ENCODE measurements at regions of chr14 and their contacts with region 1.

Region 1: DNA sequence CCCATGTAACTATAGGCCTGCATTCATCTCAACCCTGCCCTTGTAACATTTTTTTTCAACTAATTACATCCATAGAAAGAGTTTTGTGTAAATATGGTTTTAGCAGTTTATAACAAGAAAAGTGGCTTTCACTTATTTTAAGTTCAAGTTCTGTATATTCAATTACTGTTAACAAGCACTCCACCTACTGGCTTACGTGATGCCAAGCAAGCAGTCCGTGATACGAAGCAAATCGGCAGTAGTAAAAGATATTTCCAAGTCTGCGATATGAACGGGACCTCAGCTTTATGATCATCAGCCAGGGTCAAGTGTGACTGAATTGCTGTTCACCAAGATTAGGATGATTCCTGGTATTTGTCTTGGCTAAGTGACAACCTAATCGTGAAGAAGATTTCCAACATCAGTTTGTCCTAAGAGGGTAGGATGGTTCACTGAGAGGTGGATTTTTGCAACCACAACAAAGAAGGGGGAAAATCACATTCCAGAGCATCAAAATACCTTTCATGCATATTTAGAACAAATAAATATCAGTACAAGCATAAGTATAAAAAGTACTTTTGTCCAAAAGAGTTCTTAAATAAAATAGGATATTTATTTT is 456.2 kb downstream of the FOXG1 start:
- DNase-seq: no peak
- ATAC-seq: no peak
- H3K4me3 ChIP-seq: no peak overlapping the region
- H3K27ac ChIP-seq: no peak overlapping the region
- H3K4me1 ChIP-seq: no peaks in the 10 kb centered on the region
- H3K27me3 ChIP-seq: no peaks in the 10 kb centered on the region
- CTCF ChIP-seq: peak; percentile 31 to 42 (median 41); a peak in 5 of 6 replicates
- EP300 ChIP-seq: no peak
- POLR2A ChIP-seq: no peak
- RAD21 ChIP-seq: peak; percentile 48

Region 2: DNA sequence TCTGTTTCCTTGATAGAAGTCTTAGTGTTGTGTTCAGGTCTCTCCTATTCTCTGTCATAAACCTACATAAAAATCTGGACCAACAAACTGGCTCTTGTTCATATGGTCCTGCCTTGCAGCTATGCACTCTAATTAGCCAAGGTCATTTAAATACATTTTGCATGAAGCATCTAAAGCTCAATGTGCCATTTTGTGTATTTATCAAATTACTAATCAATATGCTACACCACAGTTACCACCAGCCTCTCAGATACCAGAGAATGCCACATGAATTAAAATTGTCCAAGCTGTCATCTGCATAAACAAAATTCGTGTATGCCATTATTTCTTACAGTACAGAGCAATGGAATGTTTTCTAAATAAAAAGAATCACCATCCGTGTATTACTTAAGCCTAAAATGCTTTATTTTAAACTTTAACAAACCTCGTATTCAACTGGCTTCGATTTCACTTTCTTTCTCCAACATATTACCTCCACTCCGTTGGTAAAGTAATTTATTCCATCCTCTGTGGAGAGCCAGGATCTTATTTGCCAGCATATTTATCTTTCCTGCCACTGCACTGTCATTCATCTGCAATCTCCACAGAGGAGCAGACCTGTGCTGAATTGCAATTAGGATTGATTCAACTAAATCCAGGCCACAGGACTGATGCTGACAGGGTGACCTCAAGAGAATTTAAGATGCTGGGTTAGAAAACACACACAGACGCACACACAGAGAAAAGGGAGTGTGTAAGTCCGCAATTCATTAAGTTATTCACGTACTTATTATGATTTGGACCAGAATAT is 740.3 kb before region 1 on chr14:
- CTCF ChIA-PET with region 1: no interaction called
- POLR2A ChIA-PET with region 1: no interaction called
- RAD21 ChIA-PET with region 1: no interaction called
- SMC1A ChIA-PET with region 1: no interaction called
- in situ Hi-C with region 1: no loop called
- intact Hi-C with region 1: no loop called
- DNase-seq: no peak
- ATAC-seq: no peak
- H3K4me3 ChIP-seq: no peak overlapping the region
- H3K27ac ChIP-seq: no peak overlapping the region
- H3K4me1 ChIP-seq: no peaks in the 10 kb centered on the region
- H3K27me3 ChIP-seq: no peaks in the 10 kb centered on the region
- CTCF ChIP-seq: no peak
- EP300 ChIP-seq: no peak
- POLR2A ChIP-seq: no peak
- RAD21 ChIP-seq: no peak

Region 3: DNA sequence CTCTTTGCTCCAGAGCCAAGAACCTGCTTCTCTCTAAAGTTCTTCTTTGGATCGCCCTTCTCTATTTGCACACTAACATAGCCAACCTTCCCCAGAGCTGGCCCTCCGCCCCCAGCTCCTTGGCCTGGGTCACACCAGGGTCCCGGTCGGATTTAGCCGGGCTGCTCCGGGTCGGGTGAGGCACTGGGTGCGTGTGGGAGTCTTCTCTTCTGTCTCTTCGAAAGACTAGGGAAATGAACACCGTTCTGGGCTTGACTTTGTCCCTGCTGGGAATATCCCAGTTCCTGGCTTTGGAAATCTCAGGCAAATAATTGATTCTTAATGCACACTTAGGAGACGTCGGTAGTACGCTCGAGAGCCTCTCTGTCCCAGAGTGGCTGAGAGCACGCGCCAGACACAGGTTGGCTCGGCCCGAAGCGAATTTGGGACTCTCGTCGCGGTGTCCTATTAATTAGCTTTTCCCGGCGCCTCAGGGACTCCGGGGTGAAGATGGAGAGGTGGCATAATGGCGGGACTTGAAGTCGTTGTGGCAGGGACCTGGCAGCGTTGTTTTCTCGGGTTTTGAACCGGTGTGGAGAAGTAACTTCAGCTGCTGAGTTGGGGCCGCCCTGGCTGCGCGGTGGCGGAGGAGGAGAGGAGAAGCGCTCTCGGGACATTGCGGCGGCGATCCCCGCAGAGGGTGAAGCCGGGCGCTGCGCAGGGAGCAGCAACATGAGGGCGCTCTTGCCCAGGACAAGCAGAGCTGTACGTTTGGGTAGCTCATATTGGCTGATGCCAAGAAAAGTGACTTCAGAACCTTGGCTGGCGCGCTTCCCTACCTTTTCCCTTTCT is 448.7 kb before region 1 on chr14:
- CTCF ChIA-PET with region 1: no interaction called
- POLR2A ChIA-PET with region 1: no interaction called
- RAD21 ChIA-PET with region 1: no interaction called
- SMC1A ChIA-PET with region 1: no interaction called
- in situ Hi-C with region 1: loop called (anchors 25 kb)
- intact Hi-C with region 1: loop called (anchors 5 kb)
- DNase-seq: no peak
- ATAC-seq: peak; percentile 87
- H3K4me3 ChIP-seq: no peak overlapping the region
- H3K27ac ChIP-seq: no peak overlapping the region
- H3K4me1 ChIP-seq: no peaks in the 10 kb centered on the region
- H3K27me3 ChIP-seq: no peaks in the 10 kb centered on the region; a peak in 1 of 4 replicates
- CTCF ChIP-seq: peak; percentile 24 to 57 (median 46); a peak in 5 of 6 replicates
- EP300 ChIP-seq: no peak
- POLR2A ChIP-seq: no peak
- RAD21 ChIP-seq: peak; percentile 48

Region 4: DNA sequence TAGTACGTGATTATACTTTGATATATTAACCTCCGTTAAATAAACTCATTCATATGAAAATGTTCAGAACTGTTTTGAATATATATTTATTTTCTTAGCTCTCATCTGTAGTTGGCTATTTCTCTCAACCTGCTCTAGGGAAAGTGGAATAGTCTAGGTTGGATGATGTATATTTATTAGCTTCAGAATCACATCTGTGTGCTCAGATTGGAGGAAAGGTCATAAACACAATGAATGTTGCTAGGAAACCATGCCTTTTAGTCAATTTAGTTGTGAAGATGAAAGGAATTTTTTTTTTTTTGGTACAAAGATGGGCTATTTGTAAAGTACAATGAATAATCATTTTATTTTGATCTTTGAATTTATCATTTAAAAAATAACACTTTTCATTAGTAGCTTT is 17.1 kb before region 1 on chr14:
- CTCF ChIA-PET with region 1: no interaction called
- POLR2A ChIA-PET with region 1: no interaction called
- RAD21 ChIA-PET with region 1: no interaction called
- SMC1A ChIA-PET with region 1: no interaction called
- in situ Hi-C with region 1: no loop called
- intact Hi-C with region 1: no loop called
- DNase-seq: no peak
- ATAC-seq: no peak
- H3K4me3 ChIP-seq: no peak overlapping the region
- H3K27ac ChIP-seq: no peak overlapping the region
- H3K4me1 ChIP-seq: no peaks in the 10 kb centered on the region
- H3K27me3 ChIP-seq: no peaks in the 10 kb centered on the region
- CTCF ChIP-seq: no peak
- EP300 ChIP-seq: no peak
- POLR2A ChIP-seq: no peak
- RAD21 ChIP-seq: no peak

Region 5: DNA sequence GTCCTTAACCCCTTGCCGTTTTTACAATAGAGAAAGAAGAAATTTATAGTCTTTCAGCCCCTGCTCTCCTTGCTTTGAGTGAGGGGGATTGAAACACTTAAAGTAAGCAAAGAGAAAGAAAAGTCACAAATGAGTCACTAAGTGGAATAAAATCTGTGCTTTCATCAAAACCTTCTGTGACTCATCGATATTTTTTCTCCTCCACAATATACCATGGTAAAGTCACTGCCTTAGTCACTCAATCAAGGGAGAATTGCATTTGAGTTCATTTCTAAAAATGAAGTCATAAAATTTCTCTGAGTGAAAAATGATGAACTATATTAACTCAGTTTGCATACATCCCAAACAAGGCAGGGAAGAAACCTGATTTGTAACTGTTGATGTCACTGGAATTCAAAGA is 14.1 kb after region 1 on chr14:
- CTCF ChIA-PET with region 1: no interaction called
- POLR2A ChIA-PET with region 1: no interaction called
- RAD21 ChIA-PET with region 1: no interaction called
- SMC1A ChIA-PET with region 1: no interaction called
- in situ Hi-C with region 1: no loop called
- intact Hi-C with region 1: no loop called
- DNase-seq: no peak
- ATAC-seq: no peak
- H3K4me3 ChIP-seq: no peak overlapping the region
- H3K27ac ChIP-seq: no peak overlapping the region
- H3K4me1 ChIP-seq: no peaks in the 10 kb centered on the region
- H3K27me3 ChIP-seq: no peaks in the 10 kb centered on the region
- CTCF ChIP-seq: no peak
- EP300 ChIP-seq: no peak
- POLR2A ChIP-seq: no peak
- RAD21 ChIP-seq: no peak